HAP-1 (cell line): ENCODE measurements at regions of chr6 and their contacts with region 1.

Region 1: GRCh38 chr6:44338228-44339122 is 4.0 kb upstream of the SPATS1 start:
- DNase-seq: peak; percentile 29 to 80
- H3K4me3 ChIP-seq: no peak overlapping the region
- H3K4me1 ChIP-seq: no peaks in the 10 kb centered on the region
- H3K27me3 ChIP-seq: peaks cover 9% of the 10 kb centered on the region

Region 2: GRCh38 chr6:44265007-44265721 is 73.3 kb before region 1 on chr6 and contains the start of gene NFKBIE:
- in situ Hi-C with region 1: loop called (anchors 5 kb)
- DNase-seq: peak; percentile 78 to 95
- H3K4me3 ChIP-seq: peak within 1 kb of the TSS; percentile 67
- H3K4me1 ChIP-seq: peaks cover 11% of the 10 kb centered on the region
- H3K27me3 ChIP-seq: peaks cover 7% of the 10 kb centered on the region

Region 3: GRCh38 chr6:44439270-44440045 is 101.0 kb after region 1 on chr6:
- in situ Hi-C with region 1: no loop called
- DNase-seq: no peak
- H3K4me3 ChIP-seq: no peak overlapping the region
- H3K4me1 ChIP-seq: no peaks in the 10 kb centered on the region
- H3K27me3 ChIP-seq: no peaks in the 10 kb centered on the region

Region 4: DNA sequence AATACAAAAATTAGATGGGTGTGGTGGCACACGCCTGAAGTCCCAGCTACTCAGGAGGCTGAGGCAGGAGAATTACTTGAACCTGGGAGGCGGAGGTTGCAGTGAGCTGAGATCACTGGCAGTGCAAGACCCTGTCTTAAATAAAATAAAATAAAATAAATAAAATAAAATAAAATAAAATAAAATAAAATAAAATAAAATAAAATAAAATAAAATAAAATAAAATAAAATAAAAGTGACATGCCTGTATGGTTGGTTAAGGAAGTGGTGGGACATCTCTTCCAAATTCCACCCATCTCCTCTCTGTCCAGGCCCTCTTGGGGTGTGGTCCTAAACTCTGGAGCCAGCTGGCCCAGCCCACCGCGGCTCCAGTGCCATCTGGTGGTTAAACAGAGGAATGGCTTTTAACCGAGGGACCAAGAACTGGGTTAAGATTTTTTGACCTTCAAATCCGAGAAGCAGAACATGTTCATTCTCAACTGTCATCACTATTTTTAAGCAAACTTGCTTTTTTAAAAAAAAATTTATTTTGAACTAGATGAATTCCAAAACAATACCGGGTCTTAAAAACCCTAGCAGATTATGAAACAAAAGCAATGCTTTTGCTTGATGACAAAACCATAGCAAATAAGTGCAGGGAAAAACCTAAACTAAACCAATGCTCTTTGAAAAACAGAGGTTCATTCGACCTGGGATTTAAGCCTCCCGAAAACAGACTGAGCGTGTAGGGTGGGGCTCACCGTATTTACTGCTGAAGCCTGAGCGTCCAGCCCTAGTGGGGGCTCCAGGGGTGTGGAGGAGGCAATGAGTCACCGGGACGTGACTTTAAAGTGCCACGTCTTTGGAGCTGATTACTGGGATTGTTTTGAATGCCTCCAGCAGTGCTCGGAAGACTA is 117.8 kb after region 1 on chr6:
- in situ Hi-C with region 1: no loop called
- DNase-seq: peak; percentile 69 to 76
- H3K4me3 ChIP-seq: no peak overlapping the region
- H3K4me1 ChIP-seq: no peaks in the 10 kb centered on the region
- H3K27me3 ChIP-seq: no peaks in the 10 kb centered on the region